WTC11 (cell line): ENCODE measurements at regions of chr1 and their contacts with region 1.

Region 1: GRCh38 chr1:109773146-109773899 is 9.6 kb upstream of the EPS8L3 start:
- DNase-seq: peak; percentile 73
- ATAC-seq: peak; percentile 83
- H3K4me3 Mint-ChIP-seq: no peak overlapping the region
- H3K27ac Mint-ChIP-seq: no peak overlapping the region
- H3K4me1 Mint-ChIP-seq: peaks cover 5% of the 10 kb centered on the region
- H3K27me3 Mint-ChIP-seq: peaks cover 7% of the 10 kb centered on the region
- CTCF ChIP-seq: peak; percentile 38; the same call in 1 of the 2 replicates

Region 2: GRCh38 chr1:109718491-109718890 is 54.8 kb before region 1 on chr1:
- CTCF ChIA-PET with region 1: interaction called, 13 read pairs
- POLR2A ChIA-PET with region 1: no interaction called
- DNase-seq: no peak
- ATAC-seq: peak; percentile 68
- H3K4me3 Mint-ChIP-seq: no peak overlapping the region
- H3K27ac Mint-ChIP-seq: no peak overlapping the region
- H3K4me1 Mint-ChIP-seq: no peaks in the 10 kb centered on the region
- H3K27me3 Mint-ChIP-seq: no peaks in the 10 kb centered on the region; the same call in 1 of the 2 replicates
- CTCF ChIP-seq: no peak

Region 3: DNA sequence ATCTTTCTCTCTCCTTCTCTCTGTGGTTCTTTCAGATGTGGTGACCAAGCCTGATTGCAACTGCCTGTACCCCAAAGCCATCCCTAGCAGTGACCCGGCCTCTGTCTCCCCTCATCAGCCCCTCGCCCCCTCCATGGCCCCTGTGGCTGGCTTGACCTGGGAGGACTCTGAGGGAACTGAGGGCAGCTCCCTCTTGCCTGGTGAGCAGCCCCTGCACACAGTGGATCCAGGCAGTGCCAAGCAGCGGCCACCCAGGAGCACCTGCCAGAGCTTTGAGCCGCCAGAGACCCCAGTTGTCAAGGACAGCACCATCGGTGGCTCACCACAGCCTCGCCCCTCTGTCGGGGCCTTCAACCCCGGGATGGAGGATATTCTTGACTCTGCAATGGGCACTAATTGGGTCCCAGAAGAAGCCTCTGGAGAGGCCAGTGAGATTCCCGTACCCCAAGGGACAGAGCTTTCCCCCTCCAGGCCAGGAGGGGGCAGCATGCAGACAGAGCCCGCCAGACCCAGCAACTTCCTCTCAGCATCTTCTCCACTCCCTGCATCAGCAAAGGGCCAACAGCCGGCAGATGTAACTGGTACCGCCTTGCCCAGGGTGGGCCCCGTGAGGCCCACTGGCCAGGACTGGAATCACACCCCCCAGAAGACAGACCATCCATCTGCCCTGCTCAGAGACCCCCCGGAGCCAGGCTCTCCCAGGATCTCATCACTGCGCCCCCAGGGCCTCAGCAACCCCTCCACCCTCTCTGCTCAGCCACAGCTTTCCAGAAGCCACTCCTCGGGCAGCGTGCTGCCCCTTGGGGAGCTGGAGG is 150.0 kb after region 1 on chr1:
- CTCF ChIA-PET with region 1: interaction called, 32 read pairs
- POLR2A ChIA-PET with region 1: no interaction called
- DNase-seq: peak; percentile 73
- ATAC-seq: peak; percentile 96
- H3K4me3 Mint-ChIP-seq: 0 out of 2 replicates have a peak overlapping the region, but pooled peaks have one; percentile 16
- H3K27ac Mint-ChIP-seq: no peak overlapping the region
- H3K4me1 Mint-ChIP-seq: no peaks in the 10 kb centered on the region
- H3K27me3 Mint-ChIP-seq: no peaks in the 10 kb centered on the region
- CTCF ChIP-seq: peak; percentile 72

Region 4: DNA sequence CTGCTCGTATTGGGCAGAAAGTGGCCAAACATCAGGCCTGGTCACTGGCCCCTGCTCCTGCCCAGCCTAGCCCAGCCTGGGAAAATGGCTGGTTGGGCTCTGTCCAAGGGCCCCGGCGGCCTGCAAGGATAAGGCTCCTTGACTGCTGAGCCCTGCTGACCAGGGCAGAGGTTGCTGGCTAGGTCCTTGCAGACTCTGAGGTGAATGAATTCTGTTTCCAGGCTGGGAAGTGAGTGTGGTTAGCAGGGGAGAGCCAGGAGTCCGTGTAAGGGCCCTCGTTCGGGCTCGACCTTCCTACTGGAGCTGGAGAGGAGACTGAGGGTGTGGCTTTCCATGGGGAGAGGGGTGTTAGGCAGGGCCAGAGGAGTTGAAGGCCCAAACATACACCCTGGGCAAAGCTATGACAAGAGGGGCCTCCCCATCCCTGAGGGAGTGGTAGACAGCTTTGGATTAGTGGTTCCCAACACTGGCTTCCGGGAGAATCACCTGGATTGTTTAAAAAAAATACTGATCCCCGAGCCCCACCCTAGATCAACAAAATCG is 157.9 kb after region 1 on chr1:
- CTCF ChIA-PET with region 1: interaction called, 11 read pairs
- POLR2A ChIA-PET with region 1: no interaction called
- DNase-seq: peak; percentile 95
- ATAC-seq: peak; percentile 99
- H3K4me3 Mint-ChIP-seq: no peak overlapping the region
- H3K27ac Mint-ChIP-seq: peak overlapping the region; percentile 98
- H3K4me1 Mint-ChIP-seq: peaks cover 23% of the 10 kb centered on the region
- H3K27me3 Mint-ChIP-seq: no peaks in the 10 kb centered on the region
- CTCF ChIP-seq: no peak

Region 5: DNA sequence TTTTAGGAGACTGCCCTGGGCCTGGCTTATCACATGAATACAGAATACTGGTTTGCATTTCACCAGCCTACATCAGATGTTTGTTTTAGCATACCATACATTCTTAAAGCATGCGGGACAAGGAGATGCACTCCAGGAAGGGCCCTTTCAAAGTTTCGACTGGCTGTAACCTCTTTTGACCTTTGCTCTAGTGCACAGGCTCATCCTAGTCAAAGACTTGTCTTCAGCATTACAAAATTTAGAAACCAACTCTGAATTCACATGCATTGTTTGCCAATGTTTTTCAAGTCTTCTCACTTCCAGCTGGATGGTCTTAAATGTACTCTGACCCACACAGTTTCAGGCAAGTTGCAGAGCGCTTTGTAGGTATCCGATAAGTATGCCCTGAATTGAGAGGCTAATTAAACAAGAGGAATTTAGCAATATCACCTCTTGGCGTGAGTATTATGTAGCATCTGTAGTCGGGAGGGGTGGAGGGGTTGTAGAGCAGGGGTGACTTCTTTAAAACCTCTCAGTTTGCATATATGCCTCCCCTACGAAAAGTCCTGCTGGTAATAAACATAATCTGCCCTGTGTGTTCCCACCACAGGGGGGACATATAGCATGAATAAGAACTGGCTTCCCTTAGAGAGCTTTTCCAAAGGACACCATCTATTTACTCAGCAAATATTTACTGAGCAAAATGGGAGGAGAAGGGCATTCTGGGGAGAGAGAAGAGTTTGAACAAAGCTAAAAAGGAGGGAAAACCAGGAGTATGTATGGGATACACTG is 186.8 kb after region 1 on chr1:
- CTCF ChIA-PET with region 1: interaction called, 18 read pairs
- POLR2A ChIA-PET with region 1: no interaction called
- DNase-seq: peak; percentile 26
- ATAC-seq: peak; percentile 93
- H3K4me3 Mint-ChIP-seq: peak overlapping the region; percentile 11
- H3K27ac Mint-ChIP-seq: peak overlapping the region; percentile 50
- H3K4me1 Mint-ChIP-seq: peaks cover 36% of the 10 kb centered on the region
- H3K27me3 Mint-ChIP-seq: peaks cover 73% of the 10 kb centered on the region
- CTCF ChIP-seq: no peak

Region 6: DNA sequence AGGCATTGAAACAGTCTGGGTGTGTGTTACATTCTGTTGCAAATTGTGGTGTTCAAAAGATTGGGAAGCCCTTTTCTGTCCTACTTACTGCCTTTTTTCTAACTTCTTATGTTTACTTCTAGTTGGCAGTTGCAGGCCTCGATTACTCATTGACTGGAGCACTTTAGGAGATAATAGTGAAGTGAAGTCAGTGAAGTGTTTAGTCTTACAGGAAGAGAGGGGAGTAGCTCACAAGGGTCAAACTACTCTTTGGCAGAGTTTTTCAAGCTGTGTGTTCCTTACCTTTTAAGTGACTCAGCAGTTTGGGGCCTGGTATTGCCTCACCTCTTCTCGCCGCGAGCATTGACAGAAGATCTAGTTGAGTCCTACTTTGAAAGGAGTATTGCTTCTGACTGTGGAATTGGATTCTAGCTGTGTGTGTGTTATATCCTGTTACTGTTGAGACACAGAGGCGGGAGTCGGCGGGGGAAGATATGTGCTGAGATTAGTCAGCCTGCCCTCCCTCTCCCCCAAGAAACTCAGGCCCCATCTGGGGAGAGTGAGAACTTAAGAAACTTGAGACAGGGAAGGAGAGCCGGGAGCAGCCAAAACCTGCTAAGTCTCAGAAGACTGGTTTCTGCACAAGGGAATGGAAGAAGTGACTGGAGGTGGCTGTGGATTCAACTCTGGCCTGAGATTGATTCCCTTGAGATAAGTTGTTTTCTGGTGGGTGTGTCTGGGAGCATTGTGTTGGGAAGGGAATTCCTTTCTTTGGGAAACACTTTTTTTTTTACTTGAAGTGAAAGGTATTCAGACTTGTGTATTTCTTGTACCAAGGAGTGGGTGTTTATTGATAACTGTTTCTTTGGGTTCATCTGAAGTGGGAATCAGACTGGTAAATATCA is 230.7 kb after region 1 on chr1:
- CTCF ChIA-PET with region 1: interaction called, 14 read pairs
- POLR2A ChIA-PET with region 1: no interaction called
- DNase-seq: peak; percentile 38
- ATAC-seq: peak; percentile 78
- H3K4me3 Mint-ChIP-seq: peak overlapping the region; percentile 43
- H3K27ac Mint-ChIP-seq: peak overlapping the region; percentile 91
- H3K4me1 Mint-ChIP-seq: peaks cover 61% of the 10 kb centered on the region
- H3K27me3 Mint-ChIP-seq: no peaks in the 10 kb centered on the region
- CTCF ChIP-seq: no peak

Region 7: GRCh38 chr1:110034451-110035235 is 261.3 kb after region 1 on chr1 and contains the start of gene STRIP1:
- CTCF ChIA-PET with region 1: interaction called, 17 read pairs
- POLR2A ChIA-PET with region 1: no interaction called
- DNase-seq: peak; percentile 88
- ATAC-seq: peak; percentile 83
- H3K4me3 Mint-ChIP-seq: peak within 1 kb of the TSS; percentile 92
- H3K27ac Mint-ChIP-seq: peak within 1 kb of the TSS; percentile 95
- H3K4me1 Mint-ChIP-seq: peaks cover 33% of the 10 kb centered on the region
- H3K27me3 Mint-ChIP-seq: no peaks in the 10 kb centered on the region
- CTCF ChIP-seq: no peak
- total RNA-seq, gene STRIP1: 36.8 to 42.8 TPM (median 38.2 TPM) in 3 replicates